Common myeloid progenitor, CD34-positive (primary cell): ENCODE measurements at regions of chr15 and their contacts with region 1.

Region 1: GRCh38 chr15:68252925-68253534 is 23.5 kb upstream of the CLN6 start:
- DNase-seq: peak; percentile 74 to 87 (median 86)
- H3K4me3 ChIP-seq: no peak overlapping the region
- H3K27ac ChIP-seq: no peak overlapping the region
- H3K4me1 ChIP-seq: peaks cover 0 to 14% (median 11%) of the 10 kb centered on the region in 4 experiments
- H3K27me3 ChIP-seq: no peaks in the 10 kb centered on the region

Region 2: DNA sequence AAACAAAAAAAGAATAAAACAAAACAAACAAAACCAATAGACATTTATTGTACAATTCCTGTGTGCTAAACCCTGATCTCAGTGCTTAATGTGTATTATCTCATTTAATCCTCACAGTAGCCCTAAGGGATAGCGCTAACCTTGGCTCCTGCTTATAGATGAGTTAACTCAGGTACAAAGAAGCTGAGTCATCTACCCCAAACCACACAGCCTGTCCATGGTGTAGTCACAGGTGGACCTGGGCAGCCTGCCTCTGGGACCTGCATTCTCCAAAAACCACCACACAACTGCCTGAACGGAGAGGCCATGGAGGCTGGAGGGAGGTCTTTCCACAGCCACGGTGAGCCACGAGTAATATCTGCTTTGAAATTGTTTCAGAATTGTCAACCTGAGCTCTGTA is 18.0 kb before region 1 on chr15:
- CTCF ChIA-PET with region 1: interaction called, 10 read pairs
- POLR2A ChIA-PET with region 1: no interaction called
- DNase-seq: no peak
- H3K4me3 ChIP-seq: no peak overlapping the region
- H3K27ac ChIP-seq: no peak overlapping the region
- H3K4me1 ChIP-seq: peaks cover 0 to 24% (median 8%) of the 10 kb centered on the region in 4 experiments
- H3K27me3 ChIP-seq: no peaks in the 10 kb centered on the region

Region 3: GRCh38 chr15:68275165-68275746 is 22.2 kb after region 1 on chr15:
- CTCF ChIA-PET with region 1: interaction called, 10 read pairs
- POLR2A ChIA-PET with region 1: interaction called, 4 read pairs
- DNase-seq: no peak
- H3K4me3 ChIP-seq: no peak overlapping the region
- H3K27ac ChIP-seq: no peak overlapping the region
- H3K4me1 ChIP-seq: peaks cover 16 to 30% (median 23%) of the 10 kb centered on the region in 4 experiments
- H3K27me3 ChIP-seq: no peaks in the 10 kb centered on the region

Region 4: DNA sequence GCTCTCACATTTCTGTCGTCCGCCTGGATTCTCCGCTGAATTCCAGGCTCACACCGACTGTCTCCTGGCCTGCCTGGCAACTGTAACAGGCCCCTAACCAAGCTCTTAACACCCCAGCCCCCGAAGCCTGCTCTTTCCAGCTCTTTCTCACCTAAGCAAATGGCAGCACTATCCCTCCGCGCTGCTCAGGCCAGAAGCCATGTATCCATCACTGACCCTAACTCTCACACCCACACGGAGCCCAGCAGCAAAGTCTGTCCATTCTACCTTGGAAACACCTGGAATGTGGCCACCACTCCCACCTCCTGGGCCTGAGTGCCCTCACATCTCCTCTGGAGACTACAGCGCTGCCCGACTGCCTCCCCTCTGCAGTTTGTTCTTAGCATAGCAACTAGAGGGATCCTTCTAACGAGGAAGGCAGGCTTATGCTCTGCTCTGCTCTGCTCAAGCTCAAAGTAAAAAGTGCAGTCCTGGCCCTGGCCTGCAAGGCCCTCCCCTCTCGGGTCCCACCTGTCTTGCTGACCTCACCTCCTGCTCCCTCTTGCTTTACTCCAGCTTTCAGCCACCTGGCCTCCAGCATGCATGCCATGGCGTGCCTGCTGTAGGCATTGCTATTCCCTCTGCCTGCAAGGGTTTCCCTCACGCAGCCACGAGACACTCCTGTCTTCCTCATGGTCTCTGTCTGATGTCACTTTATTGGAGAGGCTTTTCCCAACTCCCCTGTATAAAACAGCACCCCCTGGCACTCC is 51.7 kb after region 1 on chr15:
- CTCF ChIA-PET with region 1: interaction called, 107 read pairs
- POLR2A ChIA-PET with region 1: interaction called, 4 read pairs
- DNase-seq: no peak
- H3K4me3 ChIP-seq: no peak overlapping the region
- H3K27ac ChIP-seq: no peak overlapping the region
- H3K4me1 ChIP-seq: peaks cover 0 to 11% (median 9%) of the 10 kb centered on the region in 4 experiments
- H3K27me3 ChIP-seq: no peaks in the 10 kb centered on the region

Region 5: GRCh38 chr15:68354923-68355322 is 101.9 kb after region 1 on chr15:
- CTCF ChIA-PET with region 1: no interaction called
- POLR2A ChIA-PET with region 1: no interaction called
- DNase-seq: peak in 2 of 3 donors; percentile 24 to 39
- H3K4me3 ChIP-seq: no peak overlapping the region
- H3K27ac ChIP-seq: no peak overlapping the region
- H3K4me1 ChIP-seq: peaks cover 2 to 28% (median 21%) of the 10 kb centered on the region in 4 experiments
- H3K27me3 ChIP-seq: no peaks in the 10 kb centered on the region

Region 6: DNA sequence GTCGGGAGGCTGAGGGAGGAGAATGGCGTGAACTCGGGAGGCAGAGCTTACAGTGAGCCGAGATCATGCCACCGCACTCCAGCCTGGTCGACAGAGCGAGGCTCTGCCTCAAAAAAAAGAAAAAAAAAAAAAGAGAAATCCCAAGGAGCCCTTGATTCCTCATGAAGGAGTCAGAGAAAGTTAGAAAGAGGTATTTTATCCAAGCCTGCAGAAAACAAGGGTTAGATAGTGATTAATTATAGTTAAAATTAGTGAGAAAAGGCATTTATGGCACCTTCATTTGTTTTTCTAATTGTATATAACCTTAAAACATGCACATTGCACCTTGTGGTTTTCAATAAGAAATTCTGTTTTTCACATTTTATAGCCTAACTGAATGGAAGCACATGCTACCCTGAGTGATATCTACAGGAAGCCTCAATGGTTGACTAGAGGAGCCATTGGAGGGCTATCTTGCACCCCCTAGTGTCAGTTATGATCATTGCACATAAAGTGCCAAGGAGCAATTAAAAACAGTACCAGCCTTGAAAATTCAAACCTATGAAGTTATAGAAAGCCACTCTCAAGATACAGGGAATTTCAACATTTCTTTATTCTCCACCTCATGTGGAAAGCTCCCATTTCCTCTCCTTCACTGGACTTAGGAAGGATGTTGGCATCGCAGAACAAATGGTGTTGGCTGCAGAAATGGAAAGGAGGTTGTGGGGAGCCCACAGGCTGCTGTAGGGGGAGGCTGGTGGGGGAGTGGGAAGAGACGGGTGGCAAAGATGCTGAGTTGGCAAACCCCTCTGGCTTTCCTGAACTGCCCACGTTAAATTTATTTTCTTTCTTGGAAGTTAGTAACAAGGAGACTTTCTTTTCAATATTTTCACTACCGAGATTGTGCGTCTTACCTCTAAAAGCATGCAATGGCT is 130.4 kb after region 1 on chr15:
- CTCF ChIA-PET with region 1: interaction called, 11 read pairs
- POLR2A ChIA-PET with region 1: no interaction called
- DNase-seq: peak; percentile 48 to 73 (median 69)
- H3K4me3 ChIP-seq: no peak overlapping the region
- H3K27ac ChIP-seq: no peak overlapping the region
- H3K4me1 ChIP-seq: peaks cover 9 to 23% (median 22%) of the 10 kb centered on the region in 4 experiments
- H3K27me3 ChIP-seq: no peaks in the 10 kb centered on the region